Activated CD4-positive, alpha-beta T cell treated with anti-CD3 and anti-CD28 coated beads for 36 hours (primary cell): ENCODE measurements at regions of chr19 and their contacts with region 1.

Region 1: DNA sequence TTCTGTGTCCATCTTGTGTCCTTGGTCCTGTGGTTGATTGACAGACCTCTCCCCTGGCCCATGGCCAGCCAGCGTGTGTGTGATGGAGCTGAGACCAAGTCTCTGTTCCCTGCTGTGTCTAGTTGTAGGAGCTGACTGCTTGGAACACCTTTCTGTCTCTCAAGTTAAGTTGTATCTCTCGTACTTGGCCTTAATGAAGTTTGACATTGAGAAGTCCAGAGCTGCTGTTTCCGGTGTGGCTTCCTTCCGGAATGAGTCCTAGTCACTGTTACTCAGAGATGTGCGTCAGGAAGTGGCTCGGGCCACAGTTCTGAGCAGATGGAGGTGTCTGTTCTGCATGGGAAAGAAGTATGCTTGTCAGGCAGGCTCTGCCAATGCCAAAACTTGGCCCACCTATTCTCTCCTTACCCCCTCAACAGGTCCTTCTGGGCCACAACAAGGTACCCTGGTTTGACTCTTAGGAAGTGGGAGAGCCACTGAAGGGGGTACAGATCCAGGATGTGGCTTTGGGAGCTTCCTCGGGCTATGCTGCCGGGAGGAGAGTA is 54.3 kb downstream of the GATAD2A start:
- DNase-seq: peak; percentile 85
- ATAC-seq: peak; percentile 67
- H3K4me3 Mint-ChIP-seq: peak overlapping the region; percentile 79
- H3K27ac Mint-ChIP-seq: peak overlapping the region; percentile 99
- H3K4me1 Mint-ChIP-seq: peaks cover 84% of the 10 kb centered on the region
- H3K27me3 Mint-ChIP-seq: no peaks in the 10 kb centered on the region

Region 2: DNA sequence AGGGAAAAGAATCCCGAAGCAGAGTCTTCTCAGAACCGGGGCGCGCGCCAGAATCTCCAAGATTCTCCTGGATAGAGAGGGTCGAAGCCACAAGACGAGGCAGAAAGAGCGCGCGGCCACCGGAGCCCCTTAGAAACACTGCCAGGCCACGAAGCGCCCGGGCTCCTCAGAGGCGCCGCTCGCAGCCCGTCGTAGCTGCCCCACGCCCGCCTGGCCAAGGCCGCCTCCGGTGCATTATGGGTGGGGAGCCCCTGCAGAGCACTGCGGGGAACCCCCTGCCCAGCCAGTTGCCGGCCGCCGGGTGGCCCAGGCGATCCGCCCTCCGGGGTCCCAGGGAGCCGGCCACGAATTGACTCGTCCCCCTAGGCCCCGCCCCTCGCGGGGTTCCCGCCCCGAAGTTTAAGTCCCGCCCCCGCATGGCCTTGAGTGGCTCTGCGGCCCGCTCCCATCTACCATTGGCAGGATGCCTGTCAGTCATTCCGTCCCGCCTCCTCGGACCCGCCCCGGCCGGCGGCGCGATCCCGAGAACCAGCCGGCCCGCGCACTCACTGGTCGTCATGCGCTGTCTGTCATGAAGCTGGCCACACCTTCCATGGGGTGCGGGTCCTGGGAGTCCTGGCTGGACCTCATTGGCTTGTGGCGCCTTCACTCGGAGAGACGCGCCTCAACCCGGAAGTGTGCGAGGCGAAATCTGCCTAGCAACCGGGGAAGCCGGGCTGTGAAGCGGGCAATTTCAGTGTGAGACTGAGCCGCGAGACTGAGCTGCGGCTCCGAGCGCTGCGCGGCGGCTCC is 74.5 kb before region 1 on chr19:
- CTCF ChIA-PET with region 1: interaction called, 6 read pairs
- POLR2A ChIA-PET with region 1: no interaction called
- intact Hi-C with region 1: loop called (anchors 1 kb)
- DNase-seq: peak; percentile 100
- ATAC-seq: peak; percentile 96
- H3K4me3 Mint-ChIP-seq: peak overlapping the region; percentile 86
- H3K27ac Mint-ChIP-seq: peak overlapping the region; percentile 78
- H3K4me1 Mint-ChIP-seq: peaks cover 36% of the 10 kb centered on the region
- H3K27me3 Mint-ChIP-seq: no peaks in the 10 kb centered on the region

Region 3: GRCh38 chr19:19420570-19421298 is 39.0 kb before region 1 on chr19:
- CTCF ChIA-PET with region 1: interaction called, 6 read pairs
- POLR2A ChIA-PET with region 1: no interaction called
- intact Hi-C with region 1: loop called in 1 of 2 experiments (anchors 2 kb)
- DNase-seq: peak; percentile 57
- ATAC-seq: peak; percentile 89
- H3K4me3 Mint-ChIP-seq: no peak overlapping the region
- H3K27ac Mint-ChIP-seq: peak overlapping the region; percentile 58
- H3K4me1 Mint-ChIP-seq: peaks cover 74% of the 10 kb centered on the region
- H3K27me3 Mint-ChIP-seq: no peaks in the 10 kb centered on the region

Region 4: GRCh38 chr19:19475849-19476828 is 16.4 kb after region 1 on chr19:
- CTCF ChIA-PET with region 1: interaction called, 4 read pairs
- POLR2A ChIA-PET with region 1: no interaction called
- intact Hi-C with region 1: loop called (anchors 1 kb)
- DNase-seq: peak; percentile 25
- ATAC-seq: no peak
- H3K4me3 Mint-ChIP-seq: no peak overlapping the region
- H3K27ac Mint-ChIP-seq: no peak overlapping the region
- H3K4me1 Mint-ChIP-seq: peaks cover 77% of the 10 kb centered on the region
- H3K27me3 Mint-ChIP-seq: no peaks in the 10 kb centered on the region

Region 5: DNA sequence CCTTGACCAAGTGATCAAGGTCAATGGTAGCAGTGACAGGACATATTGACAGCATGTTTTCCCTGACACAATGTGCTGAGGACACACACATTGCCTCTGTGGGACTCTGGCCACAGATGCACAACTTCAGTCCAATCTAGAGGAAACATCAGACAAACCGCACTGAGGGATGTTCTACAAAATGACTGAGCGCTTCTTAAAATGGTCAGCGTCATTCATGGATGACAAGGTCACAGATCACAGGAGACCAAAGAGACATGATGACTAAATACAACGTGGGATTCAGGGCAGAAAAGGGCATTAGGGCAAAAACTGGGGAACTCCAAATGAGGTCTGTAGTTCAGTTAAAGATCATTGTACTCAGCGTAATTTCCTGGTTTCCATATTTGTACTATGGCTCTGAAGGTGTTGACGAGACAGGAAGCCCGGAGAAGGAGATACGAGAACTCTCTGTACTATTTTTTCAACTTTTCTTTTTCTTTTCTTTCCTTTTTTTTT is 138.1 kb after region 1 on chr19:
- CTCF ChIA-PET with region 1: no interaction called
- POLR2A ChIA-PET with region 1: no interaction called
- intact Hi-C with region 1: loop called (anchors 2 to 10 kb)
- DNase-seq: peak; percentile 70
- ATAC-seq: peak; percentile 66
- H3K4me3 Mint-ChIP-seq: peak overlapping the region; percentile 67
- H3K27ac Mint-ChIP-seq: peak overlapping the region; percentile 97
- H3K4me1 Mint-ChIP-seq: peaks cover 82% of the 10 kb centered on the region
- H3K27me3 Mint-ChIP-seq: no peaks in the 10 kb centered on the region